Tibial artery (tissue), 4 donors: ENCODE measurements at regions of chr13 and their contacts with region 1.

Region 1: GRCh38 chr13:94595950-94596574 is at the start of gene TGDS:
- DNase-seq: peak; percentile 90 to 96
- H3K4me3 ChIP-seq: peak within 1 kb of the TSS; percentile 77 to 93
- H3K27ac ChIP-seq: peak within 1 kb of the TSS; percentile 71 to 86
- H3K4me1 ChIP-seq: peaks cover 0 to 18% (median 15%) of the 10 kb centered on the region in 4 donors
- H3K27me3 ChIP-seq: no peaks in the 10 kb centered on the region
- CTCF ChIP-seq: no peak

Region 2: GRCh38 chr13:93476175-93476574 is 1119.9 kb before region 1 on chr13:
- intact Hi-C with region 1: no loop called
- DNase-seq: no peak
- H3K4me3 ChIP-seq: no peak overlapping the region
- H3K27ac ChIP-seq: no peak overlapping the region
- H3K4me1 ChIP-seq: peaks cover 0 to 43% (median 0%) of the 10 kb centered on the region in 4 donors
- H3K27me3 ChIP-seq: no peaks in the 10 kb centered on the region
- CTCF ChIP-seq: no peak

Region 3: GRCh38 chr13:93977986-93978385 is 618.1 kb before region 1 on chr13:
- intact Hi-C with region 1: no loop called
- DNase-seq: no peak
- H3K4me3 ChIP-seq: no peak overlapping the region
- H3K27ac ChIP-seq: no peak overlapping the region
- H3K4me1 ChIP-seq: no peaks in the 10 kb centered on the region
- H3K27me3 ChIP-seq: no peaks in the 10 kb centered on the region
- CTCF ChIP-seq: no peak

Region 4: DNA sequence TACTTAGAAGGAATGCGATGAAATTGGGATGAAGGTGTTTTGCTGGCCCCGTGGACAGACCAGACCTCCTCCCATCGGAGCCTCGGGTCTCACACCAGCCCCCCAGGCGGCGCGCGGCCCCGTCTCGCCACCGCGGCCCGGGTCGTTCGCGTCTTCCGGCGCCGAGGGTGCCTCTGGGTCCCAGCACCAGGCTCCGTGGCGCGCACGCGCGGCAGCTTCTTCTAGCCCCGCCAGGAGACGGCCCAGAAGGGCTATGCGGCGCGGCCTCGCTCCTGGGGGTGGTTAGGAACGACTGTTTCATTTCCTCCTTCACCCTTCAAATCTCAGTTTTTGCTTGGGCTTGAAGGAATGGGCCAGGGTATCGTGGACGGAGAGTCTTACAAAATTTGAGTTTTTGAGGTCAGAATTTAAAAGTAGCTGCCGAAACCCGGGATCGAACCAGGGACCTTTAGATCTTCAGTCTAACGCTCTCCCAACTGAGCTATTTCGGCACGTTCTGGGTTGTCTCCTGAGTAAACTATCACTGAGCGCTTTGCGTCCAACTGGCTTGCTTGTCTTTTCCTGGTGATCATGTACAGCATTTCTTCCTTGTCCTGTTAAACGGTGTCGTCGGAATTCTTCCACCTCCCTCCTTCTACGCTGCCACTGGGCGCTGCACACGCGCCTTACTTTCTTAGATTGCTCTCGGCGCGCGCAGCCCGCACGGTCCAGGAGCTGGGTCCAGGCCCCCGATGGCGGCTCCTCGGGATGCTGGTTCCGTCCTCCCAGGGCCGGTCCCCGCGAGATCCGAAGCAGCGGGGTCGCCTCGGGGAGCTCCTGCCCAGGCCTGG is 46.6 kb before region 1 on chr13:
- intact Hi-C with region 1: loop called (anchors 5 kb)
- DNase-seq: peak; percentile 94 to 95
- H3K4me3 ChIP-seq: peak overlapping the region; percentile 67 to 79
- H3K27ac ChIP-seq: peak overlapping the region; percentile 94 to 99
- H3K4me1 ChIP-seq: peaks cover 0 to 14% (median 6%) of the 10 kb centered on the region in 4 donors
- H3K27me3 ChIP-seq: no peaks in the 10 kb centered on the region
- CTCF ChIP-seq: peak; percentile 8 to 32

Region 5: GRCh38 chr13:94674609-94675348 is 78.7 kb after region 1 on chr13:
- intact Hi-C with region 1: no loop called
- DNase-seq: peak in 1 of 2 donors; percentile 29
- H3K4me3 ChIP-seq: no peak overlapping the region
- H3K27ac ChIP-seq: no peak overlapping the region
- H3K4me1 ChIP-seq: no peaks in the 10 kb centered on the region
- H3K27me3 ChIP-seq: peaks cover 0 to 8% of the 10 kb centered on the region in 2 donors
- CTCF ChIP-seq: peak; percentile 9 to 18